H1 (cell line): ENCODE measurements at regions of chr3 and their contacts with region 1.

Region 1: DNA sequence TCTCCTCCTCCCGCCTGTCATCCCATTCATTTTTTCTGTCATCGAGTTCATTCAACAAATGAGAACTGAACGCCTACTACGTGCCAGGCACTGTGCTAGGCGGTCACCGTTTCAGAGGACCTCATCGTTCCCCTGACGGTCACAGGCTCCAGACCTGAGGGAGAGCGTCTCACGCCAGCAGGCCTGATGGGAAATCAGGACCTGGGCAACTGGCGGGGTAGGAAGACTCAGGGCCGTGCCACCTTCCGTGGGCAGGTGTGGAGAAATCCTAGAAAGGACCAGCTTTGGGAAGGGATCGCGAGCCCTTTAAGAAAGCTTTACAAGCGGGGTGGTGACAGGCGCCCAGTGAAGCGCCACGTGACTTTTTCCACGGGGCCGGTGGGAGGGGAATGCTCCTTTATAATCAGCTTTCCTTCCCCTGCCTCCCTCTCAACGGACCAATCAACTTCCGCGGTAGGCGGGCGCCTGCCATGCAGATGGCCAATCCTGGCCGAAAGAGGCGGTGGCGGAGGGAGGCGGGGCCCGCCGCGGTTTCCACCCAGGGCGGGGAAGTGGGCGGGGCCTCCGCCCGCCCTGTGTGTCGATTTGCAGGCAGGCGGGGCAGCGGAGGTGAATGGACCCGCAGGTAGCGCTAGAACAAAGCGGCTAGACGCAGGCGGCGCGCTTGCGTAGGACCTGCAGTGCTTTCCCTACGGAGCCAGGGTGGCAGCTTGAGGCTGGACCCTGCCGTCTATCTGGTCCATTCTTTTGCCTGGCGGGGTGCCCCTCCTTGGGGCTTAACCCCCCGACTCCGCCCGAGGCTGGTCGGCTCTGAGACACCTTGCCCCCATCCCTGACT is 816 bp upstream of the DUSP7 start:
- DNase-seq: peak; percentile 97
- H3K4me3 ChIP-seq: peak overlapping the region; percentile 46 to 89 (median 56)
- H3K27ac ChIP-seq: peak overlapping the region; percentile 21; the same call in 1 of the 2 replicates
- H3K4me1 ChIP-seq: peaks cover 0 to 29% (median 17%) of the 10 kb centered on the region in 4 experiments; a peak in 6 of 7 replicates
- H3K27me3 ChIP-seq: peaks cover 0 to 21% (median 11%) of the 10 kb centered on the region in 4 experiments; a peak in 6 of 7 replicates
- CTCF ChIP-seq: no peak
- EP300 ChIP-seq: no peak
- POLR2A ChIP-seq: no peak
- RAD21 ChIP-seq: no peak; a peak in 1 of 4 replicates

Region 2: DNA sequence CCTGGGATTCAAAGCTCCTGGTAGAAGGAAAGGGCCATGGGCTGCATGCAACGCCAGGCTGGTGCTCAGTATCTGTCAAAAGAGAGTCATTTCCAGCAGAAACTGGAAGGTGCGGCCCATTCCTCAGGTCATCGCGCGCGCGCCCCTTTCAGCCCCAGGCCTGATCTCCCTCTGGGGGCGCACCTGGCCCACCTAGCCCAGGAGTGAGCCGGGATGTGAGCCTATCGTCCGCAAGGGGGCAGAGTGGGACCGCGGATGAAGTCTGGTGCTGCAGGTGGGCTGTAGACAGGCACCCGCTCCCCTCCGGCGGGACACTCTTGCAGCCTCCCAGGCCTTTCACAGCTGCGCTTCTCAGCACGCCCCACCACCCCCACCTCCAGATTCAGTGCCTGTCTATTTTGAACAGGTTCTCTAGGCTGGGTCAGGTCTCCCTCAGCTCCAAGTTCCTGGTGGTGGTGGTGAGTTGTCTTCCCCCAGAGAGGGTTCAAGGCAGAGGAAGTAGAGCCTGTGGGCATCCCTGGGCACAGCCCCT is 55.7 kb before region 1 on chr3:
- CTCF ChIA-PET with region 1: interaction called, 984 read pairs
- POLR2A ChIA-PET with region 1: interaction called, 24 read pairs
- DNase-seq: peak; percentile 87 to 98
- H3K4me3 ChIP-seq: no peak overlapping the region
- H3K27ac ChIP-seq: no peak overlapping the region
- H3K4me1 ChIP-seq: peaks cover 11 to 46% (median 29%) of the 10 kb centered on the region in 4 experiments
- H3K27me3 ChIP-seq: no peaks in the 10 kb centered on the region; a peak in 2 of 7 replicates
- CTCF ChIP-seq: peak in 2 of 3 experiments; percentile 99 to 100; a peak in 3 of 4 replicates
- EP300 ChIP-seq: peak in 1 of 2 experiments; percentile 62; a peak in 1 of 3 replicates
- POLR2A ChIP-seq: no peak
- RAD21 ChIP-seq: peak; percentile 99

Region 3: DNA sequence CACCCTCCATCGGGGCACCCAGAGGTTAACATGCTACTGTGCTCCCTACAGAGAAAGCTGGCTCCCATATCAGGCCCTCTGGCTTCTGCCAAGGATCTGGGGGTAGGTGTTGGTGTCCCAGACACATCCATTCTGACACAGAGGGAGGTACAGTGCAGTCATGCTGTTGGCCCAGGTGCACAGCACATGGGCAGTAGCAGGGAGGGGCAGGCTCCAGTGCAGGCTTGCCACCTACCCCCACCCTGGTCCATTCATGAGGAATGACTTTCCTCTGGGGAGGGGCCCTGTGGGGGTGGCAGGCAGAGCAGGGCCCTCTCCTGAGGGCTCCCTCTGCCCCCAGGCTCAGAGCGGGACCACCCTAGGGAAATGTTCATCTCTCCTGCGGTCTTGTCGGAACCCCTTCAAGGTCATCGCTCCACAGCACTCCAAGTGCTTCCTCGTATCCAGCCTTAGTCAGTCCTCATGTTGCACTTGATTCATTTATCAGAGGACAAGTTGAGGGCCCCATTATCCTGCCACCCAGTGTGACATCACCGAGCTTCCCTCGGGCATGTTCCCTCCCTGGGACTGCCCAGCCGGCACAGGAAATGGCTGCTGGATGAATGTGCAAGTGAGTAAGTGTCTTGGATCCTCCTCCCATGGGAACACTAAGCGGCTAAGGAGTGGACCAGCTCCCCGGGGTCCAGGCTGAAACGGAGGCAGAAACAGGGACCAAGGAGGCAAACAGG is 10.8 kb before region 1 on chr3:
- CTCF ChIA-PET with region 1: interaction called, 160 read pairs
- POLR2A ChIA-PET with region 1: interaction called, 24 read pairs
- DNase-seq: no peak
- H3K4me3 ChIP-seq: no peak overlapping the region
- H3K27ac ChIP-seq: no peak overlapping the region
- H3K4me1 ChIP-seq: peaks cover 0 to 8% (median 3%) of the 10 kb centered on the region in 4 experiments; a peak in 5 of 7 replicates
- H3K27me3 ChIP-seq: no peaks in the 10 kb centered on the region
- CTCF ChIP-seq: no peak
- EP300 ChIP-seq: no peak
- POLR2A ChIP-seq: no peak
- RAD21 ChIP-seq: no peak

Region 4: GRCh38 chr3:52090131-52090932 is 33.1 kb after region 1 on chr3:
- CTCF ChIA-PET with region 1: interaction called, 58 read pairs
- POLR2A ChIA-PET with region 1: interaction called, 3 read pairs
- DNase-seq: no peak
- H3K4me3 ChIP-seq: no peak overlapping the region
- H3K27ac ChIP-seq: no peak overlapping the region
- H3K4me1 ChIP-seq: peaks cover 0 to 2% (median 0%) of the 10 kb centered on the region in 4 experiments; a peak in 2 of 7 replicates
- H3K27me3 ChIP-seq: no peaks in the 10 kb centered on the region
- CTCF ChIP-seq: no peak
- EP300 ChIP-seq: no peak
- POLR2A ChIP-seq: no peak
- RAD21 ChIP-seq: no peak

Region 5: DNA sequence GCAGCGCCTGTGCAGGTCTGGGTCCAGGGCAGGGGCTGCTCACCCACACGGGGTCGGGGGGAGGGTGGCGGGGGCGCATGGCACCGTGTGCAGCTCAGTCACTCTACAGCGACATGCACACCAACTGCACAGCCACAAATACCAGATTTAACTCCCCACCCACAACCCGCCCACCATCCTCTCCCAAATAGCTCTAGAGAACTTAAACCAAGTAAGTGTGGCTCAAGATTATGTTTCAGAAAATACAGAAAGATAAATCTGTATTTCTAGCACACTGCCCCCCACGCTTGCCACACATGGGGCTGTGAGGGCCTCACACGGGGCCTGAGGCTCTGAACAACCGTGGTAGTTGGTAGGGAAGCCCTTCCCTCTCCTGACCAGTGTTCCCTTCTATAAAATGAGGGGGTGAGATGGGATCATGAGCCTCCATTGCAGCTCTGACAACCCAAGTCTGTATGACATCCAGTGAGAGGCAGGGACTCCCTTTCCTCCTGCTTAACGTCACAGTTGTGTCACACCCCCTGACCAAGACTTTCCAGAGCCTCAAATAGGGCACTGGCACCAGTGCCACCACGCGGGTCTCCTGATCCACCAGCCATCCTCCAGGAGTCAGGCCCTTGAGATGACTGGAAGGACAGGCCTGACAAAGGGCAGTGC is 73.9 kb after region 1 on chr3:
- CTCF ChIA-PET with region 1: interaction called, 18 read pairs
- POLR2A ChIA-PET with region 1: interaction called, 3 read pairs
- DNase-seq: no peak
- H3K4me3 ChIP-seq: no peak overlapping the region
- H3K27ac ChIP-seq: no peak overlapping the region
- H3K4me1 ChIP-seq: no peaks in the 10 kb centered on the region
- H3K27me3 ChIP-seq: no peaks in the 10 kb centered on the region
- CTCF ChIP-seq: no peak
- EP300 ChIP-seq: no peak
- POLR2A ChIP-seq: no peak
- RAD21 ChIP-seq: no peak